HepG2 (cell line): ENCODE measurements at regions of chr5 and their contacts with region 1.

Region 1: GRCh38 chr5:172188033-172188892 is at the start of gene STK10:
- DNase-seq: peak; percentile 80
- ATAC-seq: peak; percentile 92
- H3K4me3 ChIP-seq: peak within 1 kb of the TSS; percentile 91 to 95 (median 93)
- H3K27ac ChIP-seq: peak within 1 kb of the TSS; percentile 61
- H3K4me1 ChIP-seq: peaks cover 29% of the 10 kb centered on the region
- H3K27me3 ChIP-seq: no peaks in the 10 kb centered on the region
- CTCF ChIP-seq: peak; percentile 99
- EP300 ChIP-seq: no peak; a peak in 2 of 4 replicates
- POLR2A ChIP-seq: peak in 1 of 2 experiments; percentile 61; a peak in 2 of 4 replicates
- RAD21 ChIP-seq: peak; percentile 99
- total RNA-seq, gene STK10: 6.2 and 7.2 TPM in 2 replicates

Region 2: GRCh38 chr5:172106511-172107356 is 81.5 kb before region 1 on chr5:
- CTCF ChIA-PET with region 1: interaction called, 40 read pairs
- POLR2A ChIA-PET with region 1: interaction called, 3 read pairs
- in situ Hi-C with region 1: loop called (anchors 5 kb)
- intact Hi-C with region 1: loop called (anchors 1 kb)
- DNase-seq: no peak
- ATAC-seq: peak; percentile 53
- H3K4me3 ChIP-seq: no peak overlapping the region
- H3K27ac ChIP-seq: no peak overlapping the region
- H3K4me1 ChIP-seq: peaks cover 23% of the 10 kb centered on the region
- H3K27me3 ChIP-seq: no peaks in the 10 kb centered on the region
- CTCF ChIP-seq: peak; percentile 90
- EP300 ChIP-seq: no peak
- POLR2A ChIP-seq: no peak
- RAD21 ChIP-seq: peak; percentile 53; the same call in 1 of the 2 replicates

Region 3: GRCh38 chr5:172123269-172123692 is 65.0 kb before region 1 on chr5:
- CTCF ChIA-PET with region 1: interaction called, 5 read pairs
- POLR2A ChIA-PET with region 1: no interaction called
- in situ Hi-C with region 1: no loop called
- intact Hi-C with region 1: loop called (anchors 1 kb)
- DNase-seq: peak; percentile 55
- ATAC-seq: peak; percentile 95
- H3K4me3 ChIP-seq: no peak overlapping the region
- H3K27ac ChIP-seq: no peak overlapping the region
- H3K4me1 ChIP-seq: no peaks in the 10 kb centered on the region
- H3K27me3 ChIP-seq: no peaks in the 10 kb centered on the region
- CTCF ChIP-seq: peak; percentile 27; the same call in 1 of the 2 replicates
- EP300 ChIP-seq: no peak
- POLR2A ChIP-seq: no peak
- RAD21 ChIP-seq: 0 out of 2 replicates have a peak, but pooled peaks have one; percentile 19

Region 4: DNA sequence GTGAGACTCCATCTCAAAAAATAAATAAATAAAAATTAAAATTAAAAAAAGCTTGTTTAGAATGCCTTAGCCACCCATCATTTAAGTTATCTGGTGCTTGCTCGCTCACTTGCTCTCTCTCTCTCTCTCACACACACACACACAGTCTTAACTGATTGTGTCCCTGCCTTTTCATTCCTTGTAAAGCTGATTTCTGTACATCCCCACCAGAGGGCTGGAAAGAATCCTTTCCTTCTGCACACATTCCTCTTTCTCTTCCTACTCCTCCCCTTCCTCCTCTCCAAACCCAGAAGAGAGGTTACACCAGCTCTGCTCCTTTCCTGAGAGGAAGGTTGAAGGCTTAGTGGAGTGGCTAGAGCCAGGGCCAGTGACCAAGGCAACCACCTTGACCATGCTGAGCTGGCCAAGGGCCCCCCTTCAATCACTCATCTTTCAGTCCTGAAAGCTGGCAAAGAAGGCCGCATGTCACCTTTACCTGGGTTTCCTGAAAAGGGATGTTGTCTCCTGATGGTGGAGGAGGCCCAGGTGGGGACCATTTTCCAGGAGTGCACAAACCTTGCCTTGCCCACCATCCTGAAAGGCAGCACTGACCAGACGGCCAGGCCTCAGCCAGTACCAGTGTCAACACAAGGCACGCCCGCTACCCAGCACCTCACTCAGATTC is 25.8 kb before region 1 on chr5:
- CTCF ChIA-PET with region 1: interaction called, 5 read pairs
- POLR2A ChIA-PET with region 1: interaction called, 19 read pairs
- in situ Hi-C with region 1: no loop called
- intact Hi-C with region 1: loop called (anchors 2 kb)
- DNase-seq: peak; percentile 30
- ATAC-seq: peak; percentile 12; the same call in 1 of the 3 replicates
- H3K4me3 ChIP-seq: no peak overlapping the region
- H3K27ac ChIP-seq: no peak overlapping the region
- H3K4me1 ChIP-seq: peaks cover 41% of the 10 kb centered on the region
- H3K27me3 ChIP-seq: no peaks in the 10 kb centered on the region
- CTCF ChIP-seq: 0 out of 2 replicates have a peak, but pooled peaks have one; percentile 7
- EP300 ChIP-seq: no peak
- POLR2A ChIP-seq: no peak
- RAD21 ChIP-seq: no peak

Region 5: GRCh38 chr5:172175263-172175719 is 13.0 kb before region 1 on chr5:
- CTCF ChIA-PET with region 1: no interaction called
- POLR2A ChIA-PET with region 1: interaction called, 48 read pairs
- in situ Hi-C with region 1: no loop called
- intact Hi-C with region 1: no loop called
- DNase-seq: peak; percentile 25
- ATAC-seq: peak; percentile 29
- H3K4me3 ChIP-seq: no peak overlapping the region
- H3K27ac ChIP-seq: no peak overlapping the region
- H3K4me1 ChIP-seq: peaks cover 44% of the 10 kb centered on the region
- H3K27me3 ChIP-seq: no peaks in the 10 kb centered on the region
- CTCF ChIP-seq: no peak
- EP300 ChIP-seq: no peak
- POLR2A ChIP-seq: 0 out of 4 replicates have a peak, but pooled peaks of 1 of the 2 experiments have one; percentile 29
- RAD21 ChIP-seq: no peak

Region 6: DNA sequence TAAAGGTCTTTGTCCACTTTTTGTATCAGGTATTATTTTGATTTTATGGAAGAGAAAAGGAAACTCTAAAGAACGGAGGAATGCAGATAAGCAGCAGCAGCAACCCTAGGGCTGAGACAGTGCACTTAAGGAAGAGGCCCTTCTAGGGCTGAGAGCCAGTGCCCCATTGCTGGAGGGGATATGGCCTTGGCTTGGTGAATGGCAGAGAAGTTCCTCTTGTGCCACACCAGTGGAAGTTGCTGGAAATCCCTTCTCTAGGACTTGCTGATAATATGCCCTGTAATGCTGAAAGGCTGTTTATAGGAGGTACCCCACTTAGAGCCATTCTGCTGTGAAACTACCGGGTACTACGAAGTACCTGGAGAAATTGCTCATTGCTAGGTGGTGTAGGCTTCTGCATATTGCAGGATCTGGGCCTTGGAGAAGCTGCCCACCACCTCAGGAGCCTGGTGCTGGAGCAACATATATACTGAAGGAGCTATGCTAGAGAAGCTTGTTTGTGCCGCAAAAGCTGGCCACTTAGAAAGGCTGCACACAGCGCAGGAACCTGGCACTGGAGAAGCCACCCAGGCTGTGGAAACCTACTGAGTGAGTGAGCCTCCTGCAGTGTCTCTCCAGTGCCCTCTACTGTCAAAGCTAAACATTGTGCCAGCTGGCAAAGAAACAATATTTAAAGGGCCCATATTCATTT is 104.9 kb after region 1 on chr5:
- CTCF ChIA-PET with region 1: interaction called, 6 read pairs
- POLR2A ChIA-PET with region 1: interaction called, 5 read pairs
- in situ Hi-C with region 1: no loop called
- intact Hi-C with region 1: loop called (anchors 1 kb)
- DNase-seq: peak; percentile 80
- ATAC-seq: peak; percentile 95
- H3K4me3 ChIP-seq: peak overlapping the region; percentile 43 to 62 (median 43); a peak in 5 of 6 replicates
- H3K27ac ChIP-seq: peak overlapping the region; percentile 29
- H3K4me1 ChIP-seq: peaks cover 22% of the 10 kb centered on the region
- H3K27me3 ChIP-seq: no peaks in the 10 kb centered on the region
- CTCF ChIP-seq: peak; percentile 93
- EP300 ChIP-seq: peak in 1 of 2 experiments; percentile 46; a peak in 1 of 4 replicates
- POLR2A ChIP-seq: no peak
- RAD21 ChIP-seq: peak; percentile 93